GM10248 (cell line): ENCODE measurements at regions of chr1 and their contacts with region 1.

Region 1: DNA sequence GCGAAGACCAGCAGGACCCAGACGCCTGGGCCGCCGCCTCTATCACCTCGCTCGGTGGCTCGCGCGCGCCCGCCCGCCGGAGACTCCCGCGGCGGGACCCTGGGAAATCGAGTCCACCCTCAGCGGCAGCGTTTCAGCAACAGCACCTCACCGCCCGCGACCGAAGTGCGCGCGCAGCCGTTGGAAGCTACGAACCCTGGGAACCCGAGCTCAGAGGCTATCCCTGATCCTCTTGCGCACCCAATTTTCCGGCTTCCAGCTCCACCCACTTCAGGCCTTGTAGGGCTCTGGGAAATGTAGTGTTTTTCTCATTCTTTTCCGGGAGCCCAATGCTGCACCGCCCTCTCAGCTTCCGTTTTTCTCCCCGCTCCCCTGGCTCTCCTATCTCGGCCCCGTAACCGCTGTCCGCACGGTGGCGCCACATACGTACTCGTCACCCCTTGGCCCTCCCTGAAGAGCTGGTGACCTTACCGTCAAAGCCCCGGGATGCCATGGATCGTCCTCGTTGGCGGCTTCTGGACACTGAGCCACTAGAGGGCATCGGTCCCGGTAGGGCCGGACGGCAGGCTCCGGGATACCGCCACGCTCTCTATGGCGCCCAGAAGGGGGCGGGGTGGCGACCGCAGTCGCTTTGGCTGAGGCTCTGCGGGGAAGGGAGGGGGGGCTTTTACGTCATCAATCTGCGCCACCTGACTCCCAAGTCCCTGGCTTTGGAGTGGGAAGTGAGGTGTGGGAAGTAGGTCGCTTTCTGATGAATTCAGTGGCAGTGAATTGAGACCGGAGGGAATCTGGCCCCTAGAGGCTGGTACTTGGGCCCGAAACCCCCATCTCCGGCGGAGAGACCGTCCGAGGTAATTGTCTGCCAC is at the starts of genes ODR4 and TPR:
- DNase-seq: peak; percentile 91
- CTCF ChIP-seq: peak; percentile 84

Region 2: GRCh38 chr1:186325239-186325638 is 50.1 kb before region 1 on chr1:
- CTCF ChIA-PET with region 1: interaction called, 18 read pairs
- POLR2A ChIA-PET with region 1: no interaction called
- DNase-seq: no peak
- CTCF ChIP-seq: no peak

Region 3: DNA sequence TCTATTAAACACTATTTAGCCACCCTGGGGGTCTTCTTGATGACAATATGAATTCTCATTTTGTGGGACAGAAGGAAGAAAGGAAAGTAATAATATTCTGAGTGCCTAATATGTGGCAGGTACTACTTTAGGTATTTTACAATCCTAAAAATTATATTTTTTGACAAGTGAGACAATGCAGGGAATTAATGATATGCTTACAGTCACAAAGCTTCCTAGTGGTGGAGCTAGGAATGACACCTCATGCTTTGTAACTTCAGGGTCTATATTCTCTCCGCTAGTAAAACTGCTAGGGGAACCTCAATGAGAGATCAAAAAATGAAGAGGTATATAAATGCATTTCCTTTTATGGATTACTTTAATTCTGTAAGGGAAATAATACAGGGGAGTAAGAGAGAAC is 44.6 kb before region 1 on chr1:
- CTCF ChIA-PET with region 1: interaction called, 10 read pairs
- POLR2A ChIA-PET with region 1: no interaction called
- DNase-seq: no peak
- CTCF ChIP-seq: peak; percentile 5

Region 4: DNA sequence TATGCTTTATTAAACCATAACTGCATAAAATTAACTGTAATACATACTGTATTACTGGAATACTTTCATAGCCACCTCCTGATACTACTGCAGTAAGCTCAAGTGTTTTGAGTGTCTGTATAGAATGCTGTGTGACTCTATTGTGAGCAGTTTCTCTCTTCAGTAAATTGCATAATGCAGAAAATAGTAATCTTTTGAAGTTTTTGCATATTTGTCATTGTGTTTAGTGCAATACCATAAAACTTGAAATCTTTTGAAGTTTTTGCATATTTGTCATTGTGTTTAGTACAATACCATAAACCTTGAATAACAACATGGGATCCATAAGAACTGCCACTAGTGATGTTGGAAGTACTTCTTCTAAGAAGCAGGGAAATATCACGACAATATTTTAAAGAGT is 11.4 kb before region 1 on chr1:
- CTCF ChIA-PET with region 1: interaction called, 40 read pairs
- POLR2A ChIA-PET with region 1: no interaction called
- DNase-seq: no peak
- CTCF ChIP-seq: no peak

Region 5: GRCh38 chr1:186386725-186387383 is 11.5 kb after region 1 on chr1:
- CTCF ChIA-PET with region 1: interaction called, 26 read pairs
- POLR2A ChIA-PET with region 1: interaction called, 5 read pairs
- DNase-seq: no peak
- CTCF ChIP-seq: no peak

Region 6: DNA sequence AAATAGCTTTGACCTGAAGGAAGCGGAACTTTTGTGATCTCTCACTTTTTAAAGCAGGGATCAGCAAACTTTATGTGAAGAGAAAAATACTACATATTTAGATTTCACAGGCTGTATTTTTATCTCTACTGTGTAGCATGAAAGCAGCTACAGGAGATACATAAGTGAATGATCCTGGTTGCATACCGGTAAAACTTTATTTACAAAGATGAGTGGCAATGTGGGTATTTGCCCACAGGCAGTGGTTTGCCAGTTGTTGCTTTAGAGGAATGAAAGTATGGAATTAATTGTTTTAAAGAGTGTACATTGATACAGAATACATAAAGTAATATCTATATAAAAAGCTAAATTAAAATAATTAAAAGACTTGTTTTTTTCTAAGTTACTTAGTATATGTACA is 18.2 kb after region 1 on chr1:
- CTCF ChIA-PET with region 1: interaction called, 26 read pairs
- POLR2A ChIA-PET with region 1: no interaction called
- DNase-seq: no peak
- CTCF ChIP-seq: no peak

Region 7: DNA sequence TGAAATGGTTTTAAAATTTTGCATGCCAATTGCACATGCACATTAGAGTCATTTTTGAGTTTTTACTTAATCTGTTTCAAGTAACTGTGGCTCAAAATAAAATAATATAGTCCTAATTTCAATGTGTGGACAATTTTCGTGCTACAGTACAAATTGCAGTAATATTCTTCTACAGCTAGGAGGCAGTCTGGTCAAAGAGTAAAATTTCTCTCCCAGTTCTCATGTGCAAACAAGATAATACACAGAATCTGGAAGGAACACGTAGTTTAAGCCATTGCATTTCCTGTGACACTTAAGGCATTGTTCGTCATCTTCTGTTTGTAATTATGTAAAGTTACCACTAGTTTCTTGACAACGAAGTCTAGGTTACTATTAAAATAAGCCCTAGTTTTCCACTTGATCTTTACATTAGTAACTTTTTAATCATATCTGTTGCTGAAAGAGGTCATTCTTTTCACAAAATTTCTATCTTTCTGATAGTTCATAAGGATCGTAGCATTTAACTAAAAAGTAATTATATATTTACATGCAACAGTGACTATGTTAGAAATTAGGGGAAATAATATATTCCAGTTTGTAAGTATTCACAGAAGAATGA is 29.2 kb after region 1 on chr1:
- CTCF ChIA-PET with region 1: interaction called, 12 read pairs
- POLR2A ChIA-PET with region 1: interaction called, 3 read pairs
- DNase-seq: peak; percentile 45
- CTCF ChIP-seq: peak; percentile 60